GM13977 (cell line): ENCODE measurements at regions of chr1 and their contacts with region 1.

Region 1: DNA sequence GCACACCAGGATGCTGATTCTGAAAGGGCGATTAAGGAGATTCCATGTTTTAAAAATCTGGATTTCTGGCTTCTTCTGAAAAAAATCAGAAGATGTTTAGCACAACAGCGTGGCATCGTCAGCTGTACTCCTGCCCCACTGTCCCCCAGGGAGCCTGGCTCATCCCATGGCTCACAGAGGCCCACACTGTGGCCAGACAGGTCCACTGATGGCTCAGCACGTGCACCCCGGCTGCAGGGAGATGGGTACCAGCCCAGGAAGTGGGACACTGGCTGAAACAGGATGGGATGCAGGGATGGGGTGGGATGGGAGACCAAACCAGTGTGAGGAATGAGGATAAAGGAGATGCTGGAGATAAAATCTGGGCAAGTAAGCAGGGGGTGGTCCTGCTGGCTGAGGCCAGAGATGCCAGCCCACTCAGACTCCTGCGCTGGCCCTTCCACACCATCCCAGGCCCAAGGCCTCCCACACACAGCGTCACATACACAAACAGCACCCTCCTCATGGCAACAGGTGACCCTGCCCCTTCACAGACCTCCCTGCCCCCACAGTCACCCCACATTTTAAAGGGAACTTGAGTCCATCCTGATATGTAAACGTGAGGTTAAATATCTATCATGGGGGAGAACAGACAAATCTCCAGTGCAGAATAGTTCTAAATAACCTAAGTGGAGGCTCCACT is 23.9 kb upstream of the SAMD11 start:
- DNase-seq: no peak
- CTCF ChIP-seq: no peak

Region 2: GRCh38 chr1:788835-789234 is 110.9 kb before region 1 on chr1:
- in situ Hi-C with region 1: no loop called
- DNase-seq: no peak
- CTCF ChIP-seq: no peak

Region 3: GRCh38 chr1:975896-976683 is 76.3 kb after region 1 on chr1:
- in situ Hi-C with region 1: loop called (anchors 10 kb)
- DNase-seq: peak; percentile 93
- CTCF ChIP-seq: peak; percentile 87

Region 4: GRCh38 chr1:1122078-1122811 is 222.5 kb after region 1 on chr1:
- in situ Hi-C with region 1: no loop called
- DNase-seq: peak; percentile 94
- CTCF ChIP-seq: peak; percentile 99

Region 5: GRCh38 chr1:1137256-1138045 is 237.7 kb after region 1 on chr1:
- in situ Hi-C with region 1: no loop called
- DNase-seq: peak; percentile 94
- CTCF ChIP-seq: no peak

Region 6: GRCh38 chr1:1337793-1338147 is 438.0 kb after region 1 on chr1:
- in situ Hi-C with region 1: no loop called
- DNase-seq: peak; percentile 83
- CTCF ChIP-seq: no peak